ENCODE measurements at regions of chr15 and their contacts with region 1.

Region 1: DNA sequence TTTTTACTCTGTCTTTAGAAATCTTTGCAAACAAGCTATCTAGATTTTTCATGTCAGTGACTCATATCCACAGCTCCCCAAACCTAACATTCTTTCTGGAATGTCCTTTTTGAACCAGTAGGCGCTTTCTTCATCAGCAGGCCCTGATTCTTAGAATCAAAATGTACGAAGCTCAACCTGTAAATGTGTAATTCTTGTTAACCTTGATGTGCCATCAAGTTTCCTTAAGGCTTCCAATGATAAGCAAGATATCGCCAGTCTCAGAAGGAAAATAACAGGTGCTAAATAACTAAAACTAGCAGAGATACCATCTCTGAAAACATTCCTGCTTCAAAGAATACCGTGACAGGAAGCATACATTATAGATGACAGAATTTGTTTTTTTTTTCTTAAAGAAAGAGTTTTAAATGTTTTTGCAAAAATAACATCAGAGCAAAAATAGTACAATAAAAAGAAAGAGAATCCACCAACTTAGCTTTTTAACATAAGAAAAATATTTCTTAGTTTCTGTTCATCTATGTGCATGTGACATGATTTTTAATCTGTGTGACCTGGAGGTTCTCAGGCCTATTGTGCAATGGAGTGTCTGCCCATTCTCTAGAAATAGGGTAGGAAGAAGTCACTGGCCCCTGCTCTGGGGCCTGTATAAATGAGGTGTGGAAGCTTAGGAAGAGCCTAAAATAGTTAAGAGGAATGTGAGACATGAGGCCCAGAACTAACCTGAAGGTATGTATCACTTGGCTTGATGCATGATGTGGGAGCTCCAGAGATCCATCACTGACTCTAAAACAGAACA is 14.7 kb upstream of the SECISBP2L start:
- DNase-seq: no peak
- H3K4me3 ChIP-seq: no peak overlapping the region
- H3K27ac ChIP-seq: no peak overlapping the region
- H3K4me1 ChIP-seq: peaks cover 0 to 8% (median 3%) of the 10 kb centered on the region in 4 experiments; a peak in 5 of 7 replicates
- H3K27me3 ChIP-seq: no peaks in the 10 kb centered on the region
- CTCF ChIP-seq: no peak
- EP300 ChIP-seq: no peak
- POLR2A ChIP-seq: no peak
- RAD21 ChIP-seq: no peak

Region 2: GRCh38 chr15:48946088-48946839 is 114.6 kb before region 1 on chr15:
- CTCF ChIA-PET with region 1: no interaction called
- POLR2A ChIA-PET with region 1: no interaction called
- DNase-seq: no peak
- H3K4me3 ChIP-seq: no peak overlapping the region
- H3K27ac ChIP-seq: no peak overlapping the region
- H3K4me1 ChIP-seq: no peaks in the 10 kb centered on the region
- H3K27me3 ChIP-seq: no peaks in the 10 kb centered on the region; a peak in 1 of 7 replicates
- CTCF ChIP-seq: no peak
- EP300 ChIP-seq: no peak
- POLR2A ChIP-seq: no peak
- RAD21 ChIP-seq: no peak

Region 3: DNA sequence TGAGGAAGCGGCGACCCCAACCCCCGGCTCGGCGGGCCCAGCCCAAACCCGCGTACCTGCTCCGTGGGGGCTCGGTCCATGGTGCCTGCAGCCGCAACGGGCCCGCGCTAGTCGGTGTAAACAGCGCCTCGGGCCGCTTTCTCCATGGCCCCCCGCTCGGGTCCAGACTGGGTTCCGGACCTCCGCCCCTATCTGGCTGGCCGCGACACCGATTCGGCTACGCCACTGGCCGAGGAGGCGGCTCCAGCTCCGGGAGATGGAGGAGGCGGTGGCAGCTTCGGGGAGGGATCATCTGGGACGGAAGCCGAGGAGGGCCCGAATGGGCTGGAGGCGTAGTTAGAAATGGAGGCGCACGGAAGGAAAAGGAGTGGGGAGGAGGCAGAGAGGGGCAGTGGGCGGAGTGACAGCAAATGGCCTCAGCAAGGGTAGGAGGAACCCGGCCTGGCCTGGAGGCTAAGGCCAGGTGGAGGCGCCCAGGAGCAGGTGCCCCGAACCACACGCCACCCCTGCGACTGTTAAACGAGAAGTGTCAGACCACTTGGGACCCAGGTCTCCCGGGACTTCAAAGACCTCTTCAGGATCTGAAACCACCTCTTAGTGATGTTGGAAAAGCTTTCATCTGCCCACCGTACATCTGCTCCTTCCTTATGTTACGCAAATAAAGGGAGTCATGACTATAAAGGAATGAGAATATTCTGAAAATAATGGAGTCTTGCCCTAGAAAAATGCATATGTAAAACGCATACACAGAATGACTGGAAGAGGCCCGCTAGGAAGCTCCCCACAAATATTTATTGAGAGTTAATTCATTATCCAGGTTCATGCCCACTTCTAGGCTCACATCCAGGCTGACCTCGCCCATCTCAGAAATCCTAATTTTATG is 14.4 kb before region 1 on chr15 and contains the start of gene SECISBP2L:
- CTCF ChIA-PET with region 1: interaction called, 25 read pairs
- POLR2A ChIA-PET with region 1: interaction called, 6 read pairs
- DNase-seq: peak; percentile 92 to 94
- H3K4me3 ChIP-seq: peak within 1 kb of the TSS; percentile 85 to 97 (median 92)
- H3K27ac ChIP-seq: peak within 1 kb of the TSS; percentile 47
- H3K4me1 ChIP-seq: no peaks in the 10 kb centered on the region
- H3K27me3 ChIP-seq: no peaks in the 10 kb centered on the region
- CTCF ChIP-seq: peak; percentile 66 to 87 (median 79)
- EP300 ChIP-seq: no peak; a peak in 1 of 3 replicates
- POLR2A ChIP-seq: peak in 1 of 2 experiments; percentile 83; a peak in 1 of 3 replicates
- RAD21 ChIP-seq: peak; percentile 69 to 70
- total RNA-seq, gene SECISBP2L: 22.8 and 25.7 TPM in 2 replicates

Region 4: GRCh38 chr15:49169880-49170597 is 109.1 kb after region 1 on chr15 and contains the start of gene GALK2:
- CTCF ChIA-PET with region 1: no interaction called
- POLR2A ChIA-PET with region 1: no interaction called
- DNase-seq: peak; percentile 87 to 88
- H3K4me3 ChIP-seq: peak within 1 kb of the TSS; percentile 67 to 88 (median 78)
- H3K27ac ChIP-seq: peak within 1 kb of the TSS; percentile 51
- H3K4me1 ChIP-seq: no peaks in the 10 kb centered on the region
- H3K27me3 ChIP-seq: no peaks in the 10 kb centered on the region; a peak in 2 of 7 replicates
- CTCF ChIP-seq: no peak
- EP300 ChIP-seq: peak in 1 of 2 experiments; percentile 50; a peak in 1 of 3 replicates
- POLR2A ChIP-seq: peak; percentile 50 to 79
- RAD21 ChIP-seq: no peak
- total RNA-seq, gene GALK2: 16.1 and 18.0 TPM in 2 replicates